ENCODE measurements at regions of chr10 and their contacts with region 1.

Region 1: GRCh38 chr10:43689955-43690771 is 41.5 kb upstream of the ZNF32 start:
- DNase-seq: peak; percentile 89 to 95 (median 91)
- ATAC-seq: peak; percentile 94 to 98 (median 97)
- H3K4me3 ChIP-seq: peak overlapping the region; percentile 41 to 68 (median 65)
- H3K27ac ChIP-seq: peak overlapping the region; percentile 85 to 97 (median 90)
- H3K4me1 ChIP-seq: peaks cover 0 to 56% (median 29%) of the 10 kb centered on the region in 12 donors
- H3K27me3 ChIP-seq: no peaks in the 10 kb centered on the region
- CTCF ChIP-seq: peak; percentile 74 to 94 (median 86)
- POLR2A ChIP-seq: peak in 1 of 2 donors; percentile 34

Region 2: GRCh38 chr10:43781480-43782361 is 91.6 kb after region 1 on chr10:
- intact Hi-C with region 1: loop called in 2 of 10 experiments (anchors 5 to 10 kb)
- DNase-seq: no peak
- ATAC-seq: peak in 2 of 4 donors; percentile 39 to 63
- H3K4me3 ChIP-seq: no peak overlapping the region
- H3K27ac ChIP-seq: no peak overlapping the region
- H3K4me1 ChIP-seq: peaks cover 0 to 16% (median 1%) of the 10 kb centered on the region in 12 donors
- H3K27me3 ChIP-seq: no peaks in the 10 kb centered on the region
- CTCF ChIP-seq: no peak
- POLR2A ChIP-seq: no peak

Region 3: GRCh38 chr10:43863859-43864591 is 173.9 kb after region 1 on chr10:
- intact Hi-C with region 1: loop called in 3 of 10 experiments (anchors 5 to 10 kb)
- DNase-seq: peak in 4 of 5 donors; percentile 49 to 70 (median 66)
- ATAC-seq: peak; percentile 66 to 85 (median 84)
- H3K4me3 ChIP-seq: no peak overlapping the region
- H3K27ac ChIP-seq: peak overlapping the region; percentile 70 to 92 (median 84)
- H3K4me1 ChIP-seq: peaks cover 12 to 69% (median 38%) of the 10 kb centered on the region in 12 donors
- H3K27me3 ChIP-seq: no peaks in the 10 kb centered on the region
- CTCF ChIP-seq: no peak
- POLR2A ChIP-seq: no peak

Region 4: DNA sequence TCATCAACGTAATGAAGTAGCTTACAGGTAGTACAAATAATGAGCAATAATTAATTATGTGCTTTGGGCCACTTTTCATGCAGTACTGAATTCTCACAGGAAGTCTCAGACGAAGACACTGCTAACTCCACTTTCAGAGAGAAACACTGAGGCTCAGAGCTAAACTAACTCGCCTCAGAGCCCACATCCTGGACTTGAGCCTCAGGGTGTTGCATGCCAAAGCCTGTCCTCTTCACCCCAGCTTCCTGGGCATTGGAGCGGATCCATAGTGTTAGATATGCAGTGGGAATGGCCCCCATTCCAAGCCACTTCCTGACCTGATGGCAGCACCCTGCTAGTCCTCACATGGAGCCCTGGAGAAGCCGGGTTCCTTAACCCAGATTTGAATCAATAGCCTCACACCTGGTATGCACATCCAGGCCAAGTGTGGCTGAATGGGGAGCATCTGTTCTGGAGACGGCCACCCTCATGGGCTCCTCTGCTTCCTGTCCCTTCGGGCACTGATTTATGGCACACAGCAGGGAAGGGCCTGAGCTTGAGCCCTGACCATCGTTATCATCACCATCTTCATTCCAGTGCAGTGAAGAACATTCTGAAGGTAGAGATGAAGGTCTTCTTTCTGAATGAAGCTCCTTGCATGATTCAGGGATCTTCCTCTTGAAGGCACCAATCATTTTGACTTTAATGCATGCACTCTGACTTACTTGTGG is 223.7 kb after region 1 on chr10:
- intact Hi-C with region 1: loop called in 5 of 10 experiments (anchors 2 to 10 kb)
- DNase-seq: no peak
- ATAC-seq: no peak
- H3K4me3 ChIP-seq: no peak overlapping the region
- H3K27ac ChIP-seq: no peak overlapping the region
- H3K4me1 ChIP-seq: peaks cover 4 to 29% (median 19%) of the 10 kb centered on the region in 12 donors
- H3K27me3 ChIP-seq: no peaks in the 10 kb centered on the region
- CTCF ChIP-seq: no peak
- POLR2A ChIP-seq: no peak

Region 5: GRCh38 chr10:44030143-44030542 is 340.0 kb after region 1 on chr10:
- intact Hi-C with region 1: loop called in 2 of 10 experiments (anchors 1 to 5 kb)
- DNase-seq: peak in 1 of 5 donors; percentile 8
- ATAC-seq: peak in 2 of 4 donors; percentile 38 to 63
- H3K4me3 ChIP-seq: no peak overlapping the region
- H3K27ac ChIP-seq: peak overlapping the region in 1 of 12 donors; percentile 23
- H3K4me1 ChIP-seq: peaks cover 0 to 15% (median 0%) of the 10 kb centered on the region in 12 donors
- H3K27me3 ChIP-seq: no peaks in the 10 kb centered on the region
- CTCF ChIP-seq: peak in 5 of 12 donors; percentile 26 to 37 (median 27)
- POLR2A ChIP-seq: no peak

Region 6: GRCh38 chr10:44386546-44387052 is 696.4 kb after region 1 on chr10:
- intact Hi-C with region 1: loop called in 8 of 10 experiments (anchors 1 to 5 kb)
- DNase-seq: peak; percentile 65 to 86 (median 75)
- ATAC-seq: peak; percentile 52 to 86 (median 83)
- H3K4me3 ChIP-seq: peak overlapping the region in 4 of 12 donors; percentile 14 to 87 (median 30)
- H3K27ac ChIP-seq: peak overlapping the region in 3 of 12 donors; percentile 79 to 89 (median 82)
- H3K4me1 ChIP-seq: peaks cover 0 to 49% (median 20%) of the 10 kb centered on the region in 12 donors
- H3K27me3 ChIP-seq: peaks cover 0 to 26% (median 0%) of the 10 kb centered on the region in 9 donors
- CTCF ChIP-seq: peak; percentile 82 to 95 (median 92)
- POLR2A ChIP-seq: no peak

Measured in heart left ventricle (tissue), 16 donors.